PC-9 (cell line): ENCODE measurements at regions of chr3 and their contacts with region 1.

Region 1: GRCh38 chr3:174440741-174441587 is 418.2 kb upstream of the NAALADL2 start:
- DNase-seq: peak; percentile 82 to 88
- H3K4me3 ChIP-seq: peak overlapping the region; percentile 74
- H3K27ac ChIP-seq: peak overlapping the region; percentile 79
- H3K4me1 ChIP-seq: peaks cover 33% of the 10 kb centered on the region
- H3K27me3 ChIP-seq: no peaks in the 10 kb centered on the region
- CTCF ChIP-seq: 0 out of 2 replicates have a peak, but pooled peaks have one; percentile 4

Region 2: GRCh38 chr3:173395412-173396181 is 1045.4 kb before region 1 on chr3:
- CTCF ChIA-PET with region 1: no interaction called
- POLR2A ChIA-PET with region 1: no interaction called
- intact Hi-C with region 1: loop called (anchors 5 kb)
- DNase-seq: peak; percentile 70 to 89
- H3K4me3 ChIP-seq: peak overlapping the region; percentile 56
- H3K27ac ChIP-seq: peak overlapping the region; percentile 57
- H3K4me1 ChIP-seq: peaks cover 30% of the 10 kb centered on the region
- H3K27me3 ChIP-seq: peaks cover 44% of the 10 kb centered on the region
- CTCF ChIP-seq: no peak

Region 3: GRCh38 chr3:174125267-174125824 is 315.6 kb before region 1 on chr3:
- CTCF ChIA-PET with region 1: no interaction called
- POLR2A ChIA-PET with region 1: no interaction called
- intact Hi-C with region 1: loop called (anchors 2 kb)
- DNase-seq: peak in 1 of 2 experiments; percentile 8
- H3K4me3 ChIP-seq: no peak overlapping the region
- H3K27ac ChIP-seq: no peak overlapping the region
- H3K4me1 ChIP-seq: peaks cover 13% of the 10 kb centered on the region
- H3K27me3 ChIP-seq: no peaks in the 10 kb centered on the region
- CTCF ChIP-seq: peak; percentile 55; the same call in 1 of the 2 replicates

Region 4: DNA sequence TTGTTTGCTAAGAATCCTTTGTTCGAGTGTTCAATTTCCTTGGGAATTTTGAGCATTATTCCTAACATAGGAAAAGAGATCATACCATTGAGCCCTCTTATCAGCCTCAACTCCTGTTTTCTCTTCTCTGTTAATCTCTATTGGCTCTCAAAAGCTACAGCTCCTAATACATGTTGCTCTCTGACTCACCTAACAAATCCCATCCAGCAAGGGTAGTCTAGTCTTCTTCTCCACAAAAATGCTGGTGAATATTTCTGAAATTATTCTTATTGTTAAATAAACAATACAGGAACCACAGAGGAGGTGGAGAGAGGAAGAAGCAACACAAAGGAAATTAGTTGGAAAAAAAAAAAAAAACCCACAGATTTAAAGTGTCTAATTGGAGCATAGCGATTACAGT is 92.3 kb after region 1 on chr3:
- CTCF ChIA-PET with region 1: no interaction called
- POLR2A ChIA-PET with region 1: interaction called, 3 read pairs
- intact Hi-C with region 1: loop called (anchors 5 kb)
- DNase-seq: no peak
- H3K4me3 ChIP-seq: no peak overlapping the region
- H3K27ac ChIP-seq: no peak overlapping the region
- H3K4me1 ChIP-seq: no peaks in the 10 kb centered on the region
- H3K27me3 ChIP-seq: no peaks in the 10 kb centered on the region
- CTCF ChIP-seq: no peak

Region 5: DNA sequence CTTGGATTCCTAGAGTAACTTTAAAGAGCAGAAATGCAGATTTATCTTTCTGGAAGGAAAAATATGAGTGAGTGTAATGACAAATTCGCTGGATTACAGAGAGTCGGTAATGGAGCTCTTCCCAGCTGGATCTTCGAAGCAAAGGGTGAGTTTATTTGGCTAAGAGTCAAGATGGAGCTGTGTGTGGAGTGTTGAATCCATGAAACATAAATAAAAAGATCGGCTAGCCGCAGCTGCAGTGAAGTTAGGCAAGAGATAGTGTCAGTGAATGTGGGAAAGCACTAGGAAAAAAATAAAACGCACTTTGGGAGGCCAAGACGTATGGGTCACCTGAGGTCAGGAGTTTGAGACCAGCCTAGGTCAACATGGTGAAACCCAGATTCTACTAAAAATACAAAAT is 428.5 kb after region 1 on chr3:
- CTCF ChIA-PET with region 1: no interaction called
- POLR2A ChIA-PET with region 1: no interaction called
- intact Hi-C with region 1: no loop called
- DNase-seq: no peak
- H3K4me3 ChIP-seq: no peak overlapping the region
- H3K27ac ChIP-seq: no peak overlapping the region
- H3K4me1 ChIP-seq: no peaks in the 10 kb centered on the region; the same call in 1 of the 2 replicates
- H3K27me3 ChIP-seq: no peaks in the 10 kb centered on the region
- CTCF ChIP-seq: no peak

Region 6: DNA sequence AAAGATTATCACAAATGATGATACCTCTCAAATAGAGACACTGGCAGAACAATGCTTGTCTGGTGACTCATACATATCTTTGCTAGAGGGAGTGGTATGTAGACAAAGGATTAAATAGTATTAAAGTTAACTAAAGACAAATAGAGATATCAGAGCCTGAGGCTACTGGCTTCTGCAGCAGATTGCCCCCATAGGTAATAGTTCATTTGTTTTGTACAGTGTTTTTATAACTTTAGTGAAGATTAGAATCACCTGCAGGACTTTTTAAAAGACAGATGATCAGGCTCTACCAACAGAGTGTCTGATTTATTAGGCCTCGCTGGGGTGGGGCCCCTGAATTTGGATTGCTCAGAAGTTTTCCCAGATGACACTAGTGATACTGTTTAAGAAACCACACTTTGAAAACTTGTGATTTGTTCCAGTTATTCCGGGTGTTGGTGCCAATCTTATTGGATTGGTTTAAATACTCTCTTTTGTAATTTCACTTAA is 514.6 kb after region 1 on chr3:
- CTCF ChIA-PET with region 1: no interaction called
- POLR2A ChIA-PET with region 1: interaction called, 4 read pairs
- intact Hi-C with region 1: loop called (anchors 10 kb)
- DNase-seq: peak; percentile 58 to 90
- H3K4me3 ChIP-seq: no peak overlapping the region
- H3K27ac ChIP-seq: 0 out of 2 replicates have a peak overlapping the region, but pooled peaks have one; percentile 3
- H3K4me1 ChIP-seq: peaks cover 25% of the 10 kb centered on the region
- H3K27me3 ChIP-seq: no peaks in the 10 kb centered on the region
- CTCF ChIP-seq: no peak